AG04449 (cell line): ENCODE measurements at regions of chr21 and their contacts with region 1.

Region 1: GRCh38 chr21:38669176-38669575 is 136.6 kb upstream of the ETS2 start:
- DNase-seq: no peak
- H3K4me3 ChIP-seq: no peak overlapping the region
- CTCF ChIP-seq: peak; percentile 41

Region 2: GRCh38 chr21:38658511-38658910 is 10.7 kb before region 1 on chr21:
- CTCF ChIA-PET with region 1: interaction called, 13 read pairs
- POLR2A ChIA-PET with region 1: no interaction called
- DNase-seq: no peak
- H3K4me3 ChIP-seq: no peak overlapping the region
- CTCF ChIP-seq: no peak

Region 3: DNA sequence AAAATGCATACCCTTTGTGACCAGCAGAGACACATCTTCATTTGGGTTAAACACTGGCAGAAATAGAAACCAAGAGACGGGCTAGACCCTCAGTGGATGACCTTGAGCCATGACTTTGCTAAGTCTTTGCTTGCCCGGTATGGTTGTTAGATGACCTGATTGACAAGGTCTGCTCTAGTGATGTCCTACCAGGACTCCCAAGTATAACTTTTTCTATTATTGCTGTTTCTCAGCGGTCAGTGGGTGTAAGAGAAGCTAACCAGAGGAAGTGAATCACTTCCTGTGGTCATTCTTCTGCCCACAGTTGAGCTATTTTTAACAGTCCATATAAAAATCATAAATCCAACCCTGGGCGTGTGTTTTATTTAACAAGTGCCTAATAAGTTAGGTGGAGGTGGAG is 10.4 kb after region 1 on chr21:
- CTCF ChIA-PET with region 1: interaction called, 20 read pairs
- POLR2A ChIA-PET with region 1: no interaction called
- DNase-seq: peak; percentile 2
- H3K4me3 ChIP-seq: no peak overlapping the region
- CTCF ChIP-seq: no peak

Region 4: GRCh38 chr21:39132248-39132647 is 463.1 kb after region 1 on chr21:
- CTCF ChIA-PET with region 1: interaction called, 33 read pairs
- POLR2A ChIA-PET with region 1: no interaction called
- DNase-seq: no peak
- H3K4me3 ChIP-seq: no peak overlapping the region
- CTCF ChIP-seq: no peak